Ovary (tissue), 10 donors: ENCODE measurements at regions of chr1 and their contacts with region 1.

Region 1: DNA sequence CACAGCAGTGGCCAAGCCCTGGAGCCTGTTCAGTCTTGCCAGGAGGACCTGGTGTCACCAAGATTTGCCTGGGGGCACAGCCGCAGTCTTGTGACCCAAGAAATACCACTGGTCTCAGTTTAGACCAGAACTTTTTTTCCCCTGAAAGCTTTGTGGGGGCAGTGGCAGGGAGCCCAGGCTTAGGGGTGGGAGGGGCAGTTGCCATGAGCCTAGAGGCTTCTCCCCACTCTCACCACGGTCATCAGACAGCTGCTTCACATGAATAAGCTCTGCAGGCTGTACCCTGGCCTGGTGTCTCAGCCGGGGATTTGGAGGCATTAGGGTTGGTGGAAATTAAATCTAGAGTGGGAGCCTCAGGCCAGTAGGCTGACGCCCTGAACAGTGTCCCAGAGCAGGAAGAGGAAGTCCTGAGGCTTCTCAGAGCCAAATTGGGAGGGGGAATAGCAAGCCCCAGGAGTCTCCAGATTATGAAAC is 73.7 kb downstream of the SLC16A1 start:
- DNase-seq: peak in 1 of 5 donors; percentile 36
- H3K4me3 ChIP-seq: no peak overlapping the region
- H3K27ac ChIP-seq: no peak overlapping the region
- H3K4me1 ChIP-seq: no peaks in the 10 kb centered on the region
- H3K27me3 ChIP-seq: no peaks in the 10 kb centered on the region
- CTCF ChIP-seq: no peak
- EP300 ChIP-seq: no peak
- POLR2A ChIP-seq: no peak

Region 2: GRCh38 chr1:112557385-112557784 is 324.9 kb before region 1 on chr1:
- intact Hi-C with region 1: no loop called
- DNase-seq: no peak
- H3K4me3 ChIP-seq: no peak overlapping the region
- H3K27ac ChIP-seq: no peak overlapping the region
- H3K4me1 ChIP-seq: no peaks in the 10 kb centered on the region
- H3K27me3 ChIP-seq: no peaks in the 10 kb centered on the region
- CTCF ChIP-seq: no peak
- EP300 ChIP-seq: no peak
- POLR2A ChIP-seq: no peak

Region 3: GRCh38 chr1:112939810-112940209 is 57.5 kb after region 1 on chr1:
- intact Hi-C with region 1: loop called in 1 of 4 experiments (anchors 10 kb)
- DNase-seq: no peak
- H3K4me3 ChIP-seq: no peak overlapping the region
- H3K27ac ChIP-seq: no peak overlapping the region
- H3K4me1 ChIP-seq: no peaks in the 10 kb centered on the region
- H3K27me3 ChIP-seq: no peaks in the 10 kb centered on the region
- CTCF ChIP-seq: no peak
- EP300 ChIP-seq: no peak
- POLR2A ChIP-seq: no peak

Region 4: DNA sequence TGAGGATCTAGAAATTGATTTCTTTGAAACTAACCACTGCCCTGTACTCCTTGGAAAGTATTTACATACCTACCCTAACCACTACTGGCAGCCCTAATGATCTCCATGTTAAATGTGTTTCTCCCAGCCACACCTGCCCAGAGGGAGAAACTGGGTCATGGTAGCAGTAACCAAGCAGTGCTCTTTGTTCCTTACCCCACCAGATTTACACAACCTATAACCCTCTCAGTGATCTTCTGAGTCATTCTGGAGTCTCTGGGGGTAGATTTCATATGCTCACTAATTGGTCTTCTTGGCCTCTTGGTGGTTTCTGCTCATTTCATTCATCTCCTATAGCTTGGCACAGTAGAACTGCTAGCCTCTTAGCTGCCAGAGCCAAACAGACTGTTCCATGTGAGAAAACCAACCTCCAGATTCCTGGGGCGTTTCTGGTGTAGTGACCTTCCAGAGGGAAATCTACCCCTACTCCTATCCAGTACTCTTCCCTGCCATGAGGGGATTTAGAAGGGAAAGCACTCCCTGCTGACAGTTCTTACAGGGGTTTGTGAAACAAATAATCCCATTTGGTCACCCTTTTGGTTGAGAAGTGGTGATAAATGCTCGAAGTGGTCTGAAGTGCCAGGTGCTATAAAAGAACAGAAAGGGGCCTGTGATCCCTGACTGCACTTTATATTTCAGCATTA is 154.5 kb after region 1 on chr1:
- intact Hi-C with region 1: loop called in 3 of 4 experiments (anchors 5 to 10 kb)
- DNase-seq: no peak
- H3K4me3 ChIP-seq: no peak overlapping the region
- H3K27ac ChIP-seq: no peak overlapping the region
- H3K4me1 ChIP-seq: no peaks in the 10 kb centered on the region
- H3K27me3 ChIP-seq: no peaks in the 10 kb centered on the region
- CTCF ChIP-seq: no peak
- EP300 ChIP-seq: no peak
- POLR2A ChIP-seq: no peak

Region 5: GRCh38 chr1:113042285-113043143 is 160.2 kb after region 1 on chr1:
- intact Hi-C with region 1: loop called in 3 of 4 experiments (anchors 5 to 10 kb)
- DNase-seq: peak; percentile 40 to 69 (median 55)
- H3K4me3 ChIP-seq: no peak overlapping the region
- H3K27ac ChIP-seq: no peak overlapping the region
- H3K4me1 ChIP-seq: no peaks in the 10 kb centered on the region
- H3K27me3 ChIP-seq: no peaks in the 10 kb centered on the region
- CTCF ChIP-seq: peak in 2 of 3 donors; percentile 24 to 37
- EP300 ChIP-seq: no peak
- POLR2A ChIP-seq: no peak